Mammary epithelial cell (primary cell): ENCODE measurements at regions of chr1 and their contacts with region 1.

Region 1: DNA sequence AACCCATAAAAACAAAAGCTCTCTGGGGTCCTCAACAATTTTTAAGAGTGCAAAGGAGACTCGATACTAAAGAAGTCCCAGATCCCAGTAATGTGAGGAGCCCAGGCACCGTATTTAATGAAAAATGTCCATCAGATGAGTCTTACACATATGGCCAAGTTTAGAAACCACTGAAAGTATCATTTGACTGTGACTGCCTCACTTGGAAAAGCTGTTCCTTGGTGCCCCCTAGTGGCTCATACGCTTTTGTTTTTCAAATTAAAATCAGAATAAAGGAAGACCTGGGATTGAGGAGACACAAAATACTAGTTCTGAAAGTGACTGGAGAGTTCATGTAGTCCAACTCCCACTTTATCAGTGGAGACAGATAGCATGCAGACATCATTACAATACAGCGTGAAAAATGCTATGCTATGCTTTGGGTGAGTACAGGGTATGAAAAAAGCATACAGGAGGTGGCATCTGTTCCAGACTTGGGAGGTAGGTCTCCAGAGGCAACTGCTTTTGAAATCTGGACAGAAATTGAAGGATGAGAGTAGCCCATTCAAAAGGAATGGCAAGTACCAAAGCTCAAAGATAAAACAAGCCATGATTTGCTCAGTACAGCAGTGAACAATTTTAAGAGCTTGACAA is 33.8 kb downstream of the GDAP2 start:
- DNase-seq: peak; percentile 68
- H3K4me3 ChIP-seq: no peak overlapping the region
- H3K27ac ChIP-seq: no peak overlapping the region
- H3K4me1 ChIP-seq: no peaks in the 10 kb centered on the region
- H3K27me3 ChIP-seq: no peaks in the 10 kb centered on the region
- CTCF ChIP-seq: peak; percentile 71 to 80

Region 2: GRCh38 chr1:117512743-117513321 is 382.8 kb before region 1 on chr1:
- CTCF ChIA-PET with region 1: no interaction called
- dilution Hi-C with region 1: no loop called
- in situ Hi-C with region 1: loop called in 1 of 2 experiments (anchors 25 kb)
- intact Hi-C with region 1: loop called (anchors 1 kb)
- DNase-seq: peak; percentile 6
- H3K4me3 ChIP-seq: no peak overlapping the region
- H3K27ac ChIP-seq: no peak overlapping the region
- H3K4me1 ChIP-seq: no peaks in the 10 kb centered on the region
- H3K27me3 ChIP-seq: no peaks in the 10 kb centered on the region
- CTCF ChIP-seq: peak; percentile 46 to 63

Region 3: DNA sequence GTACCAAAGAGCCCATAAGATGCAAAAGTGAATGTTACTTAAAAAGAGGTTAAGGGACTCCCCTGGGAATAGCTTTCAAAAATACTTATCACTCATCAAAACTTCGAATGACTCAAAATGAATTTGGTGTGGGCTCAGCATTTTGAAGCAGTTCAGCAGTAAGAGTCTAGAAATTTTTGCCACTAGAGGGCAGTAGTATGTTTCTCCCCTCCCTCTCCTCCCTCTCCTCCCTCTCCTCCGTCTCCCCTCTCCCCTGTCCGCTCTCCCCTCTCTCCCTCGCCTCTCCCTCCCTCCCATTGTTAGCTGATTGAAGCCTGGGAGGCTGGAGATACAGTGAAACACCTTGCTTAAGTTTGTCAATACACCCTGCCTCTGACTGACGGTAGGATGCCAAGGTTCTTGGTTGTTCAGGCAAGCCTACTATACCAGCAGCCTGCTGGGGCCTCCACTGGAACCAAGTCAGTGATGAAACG is 360.6 kb before region 1 on chr1:
- CTCF ChIA-PET with region 1: interaction called, 4 read pairs
- dilution Hi-C with region 1: no loop called
- in situ Hi-C with region 1: loop called in 1 of 2 experiments (anchors 25 kb)
- intact Hi-C with region 1: loop called (anchors 1 kb)
- DNase-seq: peak; percentile 51
- H3K4me3 ChIP-seq: no peak overlapping the region
- H3K27ac ChIP-seq: no peak overlapping the region
- H3K4me1 ChIP-seq: no peaks in the 10 kb centered on the region
- H3K27me3 ChIP-seq: no peaks in the 10 kb centered on the region
- CTCF ChIP-seq: peak; percentile 50 to 68

Region 4: GRCh38 chr1:117710710-117711109 is 184.9 kb before region 1 on chr1:
- CTCF ChIA-PET with region 1: no interaction called
- dilution Hi-C with region 1: no loop called
- in situ Hi-C with region 1: no loop called
- intact Hi-C with region 1: loop called (anchors 5 kb)
- DNase-seq: no peak
- H3K4me3 ChIP-seq: no peak overlapping the region
- H3K27ac ChIP-seq: no peak overlapping the region
- H3K4me1 ChIP-seq: no peaks in the 10 kb centered on the region
- H3K27me3 ChIP-seq: no peaks in the 10 kb centered on the region
- CTCF ChIP-seq: peak; percentile 19 to 30

Region 5: DNA sequence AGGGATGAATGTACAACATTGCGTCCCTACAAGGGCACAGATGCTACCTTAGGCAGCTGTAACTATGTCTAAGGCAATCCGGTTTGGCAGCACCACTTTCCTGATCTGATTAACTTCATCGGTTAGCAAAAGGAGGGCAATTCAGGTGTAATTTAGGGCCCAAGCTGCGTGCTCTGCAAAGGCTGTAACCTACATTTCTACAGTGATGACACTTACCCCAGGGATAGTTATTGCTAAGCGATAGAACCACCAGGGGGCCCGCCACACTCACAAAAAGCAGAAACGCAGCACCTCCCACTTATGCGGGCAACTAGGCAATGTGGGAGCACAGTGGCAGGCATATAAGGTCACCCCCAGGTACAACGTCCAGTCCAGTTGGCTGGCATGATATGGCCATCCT is 79.7 kb before region 1 on chr1:
- CTCF ChIA-PET with region 1: interaction called, 5 read pairs
- dilution Hi-C with region 1: no loop called
- in situ Hi-C with region 1: no loop called
- intact Hi-C with region 1: loop called (anchors 2 kb)
- DNase-seq: no peak
- H3K4me3 ChIP-seq: no peak overlapping the region
- H3K27ac ChIP-seq: no peak overlapping the region
- H3K4me1 ChIP-seq: peaks cover under 1% of the 10 kb centered on the region
- H3K27me3 ChIP-seq: no peaks in the 10 kb centered on the region
- CTCF ChIP-seq: peak in 1 of 2 donors; percentile 11